ENCODE measurements at regions of chr6 and their contacts with region 1.

Region 1: GRCh38 chr6:106339334-106340029 is 13.9 kb upstream of the ATG5 start:
- DNase-seq: no peak
- ATAC-seq: peak; percentile 68 to 88

Region 2: GRCh38 chr6:106539936-106540335 is 200.5 kb after region 1 on chr6:
- intact Hi-C with region 1: no loop called
- DNase-seq: no peak
- ATAC-seq: peak in 1 of 2 donors; percentile 57

Region 3: DNA sequence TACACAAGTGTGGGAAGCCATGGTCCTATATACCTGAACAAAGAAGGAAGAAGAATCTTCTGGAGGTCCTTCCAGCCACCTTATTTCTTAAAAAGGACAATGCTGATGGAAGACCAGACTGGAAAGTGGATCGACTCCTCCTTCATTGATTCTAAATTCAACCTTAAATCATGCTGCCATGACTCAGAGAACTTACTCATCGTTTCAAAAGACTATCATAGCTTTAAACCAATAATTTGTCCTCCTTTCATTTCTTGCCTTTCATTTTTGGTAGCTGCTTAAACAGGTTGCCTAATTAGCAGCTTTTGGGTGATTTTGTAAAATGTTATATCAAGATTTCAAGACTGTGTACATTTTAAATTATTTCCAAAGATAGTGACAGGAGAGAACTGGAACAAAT is 229.0 kb after region 1 on chr6:
- intact Hi-C with region 1: loop called in 1 of 2 experiments (anchors 5 kb)
- DNase-seq: no peak
- ATAC-seq: no peak

Region 4: DNA sequence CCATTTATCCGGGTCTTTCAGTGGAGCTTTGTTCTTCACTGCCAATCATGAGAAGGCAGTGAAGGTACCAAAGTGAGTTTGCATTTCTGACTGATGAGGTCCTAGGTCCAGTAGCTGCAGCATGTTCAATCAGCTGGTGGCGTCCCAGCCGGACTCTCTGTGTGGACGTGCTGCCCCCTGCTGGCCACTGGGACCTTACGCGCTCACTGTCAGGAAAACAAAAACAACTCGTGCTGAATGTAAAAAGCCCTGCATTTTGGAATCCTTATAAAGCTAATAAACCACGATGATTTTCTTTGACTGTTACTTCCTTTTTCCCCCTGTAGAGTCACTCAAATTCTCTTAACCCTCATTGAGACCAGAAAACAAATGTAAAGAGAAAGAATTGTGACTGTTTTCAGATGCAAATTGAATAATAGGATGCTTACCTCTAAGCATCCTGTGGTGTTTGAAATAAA is 640.0 kb after region 1 on chr6:
- intact Hi-C with region 1: loop called (anchors 5 kb)
- DNase-seq: peak; percentile 87
- ATAC-seq: peak; percentile 58 to 87